H1 (cell line): ENCODE measurements at regions of chr3 and their contacts with region 1.

Region 1: DNA sequence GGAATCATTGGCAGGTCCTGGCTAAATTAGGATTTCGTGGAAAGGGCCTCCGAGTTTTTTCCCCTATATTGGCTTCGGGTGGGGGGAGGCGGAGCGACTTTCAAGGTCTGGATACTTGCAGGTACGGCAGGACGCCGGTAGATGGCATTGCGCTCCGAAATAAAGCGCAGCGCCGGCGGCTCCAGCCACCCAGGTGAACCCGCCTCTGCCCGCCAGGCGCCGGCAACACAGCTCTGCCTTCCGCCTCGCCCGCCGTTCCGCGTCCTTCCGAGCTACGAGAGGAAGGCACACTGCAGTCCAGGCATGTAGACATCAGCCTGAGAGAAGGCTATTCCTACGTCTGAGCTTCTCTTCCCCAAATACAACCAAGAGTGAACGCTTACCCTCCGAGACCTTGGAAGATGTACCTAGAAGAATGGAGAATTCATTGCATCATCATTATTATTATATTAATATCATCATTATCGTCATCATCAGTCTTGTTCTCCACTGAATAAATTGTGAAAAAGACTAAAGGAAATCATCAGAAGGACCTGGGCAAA is 514.1 kb downstream of the MECOM start:
- DNase-seq: peak; percentile 56 to 87
- H3K4me3 ChIP-seq: peak overlapping the region; percentile 30 to 68 (median 64); a peak in 7 of 8 replicates
- H3K27ac ChIP-seq: no peak overlapping the region
- H3K4me1 ChIP-seq: peaks cover 0 to 12% (median under 1%) of the 10 kb centered on the region in 4 experiments; a peak in 3 of 7 replicates
- H3K27me3 ChIP-seq: peaks cover 11 to 36% (median 24%) of the 10 kb centered on the region in 4 experiments
- CTCF ChIP-seq: peak; percentile 75 to 88 (median 84)
- EP300 ChIP-seq: no peak
- POLR2A ChIP-seq: no peak
- RAD21 ChIP-seq: peak; percentile 82 to 86

Region 2: DNA sequence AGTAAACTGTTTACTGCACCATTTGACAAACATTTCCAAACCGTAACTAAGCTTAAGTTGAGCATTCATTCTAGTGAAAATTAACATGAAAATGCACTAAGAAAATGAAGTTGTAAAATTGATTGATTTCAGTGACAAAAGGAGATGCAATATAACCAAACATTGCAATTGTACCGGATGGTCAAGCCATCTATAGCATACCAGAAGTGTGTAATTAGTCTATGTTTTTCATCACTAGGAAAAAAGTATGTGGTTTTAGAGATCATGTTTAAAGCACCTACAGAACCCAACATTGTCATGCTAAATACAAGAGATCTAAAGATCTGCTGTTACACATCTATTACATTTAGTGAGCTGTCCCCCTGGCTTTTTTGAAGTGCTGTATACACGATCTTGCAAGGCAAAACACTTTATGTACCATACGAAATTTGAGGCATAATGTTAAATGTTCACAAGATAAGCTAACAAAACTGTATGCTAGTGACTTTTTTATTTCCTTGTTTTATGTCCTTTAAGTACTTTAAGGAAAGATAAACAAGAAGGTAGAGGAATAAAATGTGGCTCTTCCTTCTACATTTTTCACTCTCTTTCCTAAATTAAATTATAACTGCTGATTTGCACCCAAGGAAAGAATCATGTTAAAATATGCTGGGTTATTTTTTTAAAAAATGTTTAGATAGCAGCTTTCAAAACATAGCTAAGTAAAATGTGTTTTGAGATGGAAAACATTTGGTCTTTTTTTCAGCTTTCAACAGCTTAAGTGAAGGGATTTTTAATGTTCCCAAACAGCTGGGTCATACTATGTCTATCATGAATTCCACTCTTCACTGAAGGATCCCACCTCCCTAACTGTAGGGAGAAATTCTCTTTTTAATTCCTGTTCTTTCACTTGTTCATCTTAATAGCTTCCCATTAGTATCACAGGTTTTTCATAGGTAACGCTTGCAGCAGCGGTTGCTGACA is 16.1 kb after region 1 on chr3:
- CTCF ChIA-PET with region 1: interaction called, 14 read pairs
- POLR2A ChIA-PET with region 1: no interaction called
- DNase-seq: no peak
- H3K4me3 ChIP-seq: no peak overlapping the region
- H3K27ac ChIP-seq: no peak overlapping the region
- H3K4me1 ChIP-seq: no peaks in the 10 kb centered on the region
- H3K27me3 ChIP-seq: peaks cover 0 to 1% (median 0%) of the 10 kb centered on the region in 4 experiments; a peak in 1 of 7 replicates
- CTCF ChIP-seq: no peak
- EP300 ChIP-seq: no peak
- POLR2A ChIP-seq: no peak
- RAD21 ChIP-seq: no peak

Region 3: GRCh38 chr3:169295126-169295525 is 145.7 kb after region 1 on chr3:
- CTCF ChIA-PET with region 1: interaction called, 13 read pairs
- POLR2A ChIA-PET with region 1: no interaction called
- DNase-seq: no peak
- H3K4me3 ChIP-seq: no peak overlapping the region
- H3K27ac ChIP-seq: no peak overlapping the region
- H3K4me1 ChIP-seq: no peaks in the 10 kb centered on the region
- H3K27me3 ChIP-seq: no peaks in the 10 kb centered on the region; a peak in 1 of 7 replicates
- CTCF ChIP-seq: peak in 2 of 3 experiments; percentile 19 to 21; a peak in 2 of 4 replicates
- EP300 ChIP-seq: no peak
- POLR2A ChIP-seq: no peak
- RAD21 ChIP-seq: peak; percentile 51 to 52

Region 4: GRCh38 chr3:169661361-169662131 is 512.1 kb after region 1 on chr3:
- CTCF ChIA-PET with region 1: interaction called, 69 read pairs
- POLR2A ChIA-PET with region 1: interaction called, 4 read pairs
- DNase-seq: peak in 1 of 2 experiments; percentile 68
- H3K4me3 ChIP-seq: peak overlapping the region; percentile 66 to 79 (median 74)
- H3K27ac ChIP-seq: no peak overlapping the region
- H3K4me1 ChIP-seq: peaks cover 8 to 31% (median 21%) of the 10 kb centered on the region in 4 experiments
- H3K27me3 ChIP-seq: peaks cover 39 to 83% (median 70%) of the 10 kb centered on the region in 4 experiments
- CTCF ChIP-seq: no peak
- EP300 ChIP-seq: no peak
- POLR2A ChIP-seq: no peak
- RAD21 ChIP-seq: no peak

Region 5: GRCh38 chr3:169744366-169745054 is 595.1 kb after region 1 on chr3:
- CTCF ChIA-PET with region 1: interaction called, 20 read pairs
- POLR2A ChIA-PET with region 1: no interaction called
- DNase-seq: no peak
- H3K4me3 ChIP-seq: no peak overlapping the region
- H3K27ac ChIP-seq: no peak overlapping the region
- H3K4me1 ChIP-seq: peaks cover 0 to 5% (median 0%) of the 10 kb centered on the region in 4 experiments; a peak in 2 of 7 replicates
- H3K27me3 ChIP-seq: peaks cover 0 to 1% (median 0%) of the 10 kb centered on the region in 4 experiments; a peak in 1 of 7 replicates
- CTCF ChIP-seq: peak in 1 of 3 experiments; percentile 19; a peak in 1 of 4 replicates
- EP300 ChIP-seq: no peak
- POLR2A ChIP-seq: no peak
- RAD21 ChIP-seq: peak; percentile 71 to 82